Ovary (tissue), 10 donors: ENCODE measurements at regions of chrX and their contacts with region 1.

Region 1: GRCh38 chrX:74550295-74550802 is 64.1 kb downstream of the RLIM start:
- DNase-seq: peak; percentile 72 to 90 (median 86)
- H3K4me3 ChIP-seq: no peak overlapping the region
- H3K27ac ChIP-seq: no peak overlapping the region
- H3K4me1 ChIP-seq: no peaks in the 10 kb centered on the region
- H3K27me3 ChIP-seq: no peaks in the 10 kb centered on the region
- CTCF ChIP-seq: peak; percentile 81 to 96 (median 95)
- EP300 ChIP-seq: no peak
- POLR2A ChIP-seq: no peak

Region 2: DNA sequence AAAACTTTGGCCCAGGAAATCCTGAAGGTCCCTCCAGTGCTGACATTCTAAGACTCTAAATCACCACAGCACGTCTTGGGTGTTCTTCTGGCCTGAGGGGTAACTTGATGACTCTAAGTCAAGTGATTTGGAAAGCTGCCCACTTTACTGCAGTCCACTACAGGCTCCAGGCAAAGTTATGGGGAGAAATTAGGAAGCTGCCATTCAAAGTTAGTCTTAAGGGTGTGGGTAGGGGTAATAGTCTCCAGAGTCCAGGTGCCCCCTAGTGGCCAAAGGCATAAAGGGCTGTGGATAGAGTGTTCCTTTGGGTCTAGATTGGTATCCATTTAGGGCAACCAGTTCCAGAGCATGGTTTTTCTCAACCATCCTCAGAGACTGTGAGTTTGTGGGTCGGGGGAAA is 167.7 kb before region 1 on chrX:
- intact Hi-C with region 1: loop called in 1 of 4 experiments (anchors 5 kb)
- DNase-seq: peak; percentile 17 to 54 (median 45)
- H3K4me3 ChIP-seq: no peak overlapping the region
- H3K27ac ChIP-seq: no peak overlapping the region
- H3K4me1 ChIP-seq: no peaks in the 10 kb centered on the region
- H3K27me3 ChIP-seq: no peaks in the 10 kb centered on the region
- CTCF ChIP-seq: peak in 2 of 3 donors; percentile 14 to 35
- EP300 ChIP-seq: no peak
- POLR2A ChIP-seq: no peak

Region 3: DNA sequence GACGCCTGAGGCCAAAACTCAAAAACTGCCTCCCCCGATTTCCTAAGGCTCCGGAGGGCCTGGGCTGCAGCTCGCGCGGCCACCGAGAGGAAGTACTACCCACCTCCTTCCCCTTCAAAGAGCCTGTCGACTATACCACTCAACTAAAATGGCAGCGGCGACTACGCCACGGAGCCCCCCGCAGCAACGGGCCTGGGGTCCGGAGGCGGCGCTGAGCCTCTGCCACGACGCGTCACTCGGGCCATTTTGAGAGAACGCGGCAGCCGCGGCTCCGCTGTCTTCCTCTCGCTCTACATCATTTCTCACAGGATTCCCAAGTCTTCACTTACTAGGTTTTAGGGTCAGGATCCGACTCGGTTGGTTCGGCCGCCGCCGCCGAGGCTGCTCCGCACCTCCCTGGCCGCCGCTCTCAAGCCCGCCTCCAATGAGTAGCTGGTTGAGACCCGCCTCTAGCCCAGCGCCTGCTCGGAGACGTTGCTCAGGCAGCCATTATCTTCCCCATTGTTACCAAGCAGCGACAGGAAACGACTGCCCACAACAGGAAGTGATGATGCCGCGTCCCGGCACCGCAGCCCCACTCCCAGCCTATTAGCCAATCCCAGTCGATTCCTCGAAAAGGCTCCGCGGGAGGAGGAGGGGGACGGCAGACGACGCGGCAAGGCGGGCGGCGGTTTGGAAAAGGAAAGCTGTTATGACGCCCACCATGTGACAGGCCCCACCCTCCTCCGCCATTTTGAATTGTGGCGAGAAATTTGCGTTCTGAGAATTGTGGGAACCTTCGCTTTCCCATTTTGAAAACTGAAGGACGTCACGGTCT is 64.0 kb after region 1 on chrX and contains the start of gene RLIM:
- intact Hi-C with region 1: loop called in 1 of 4 experiments (anchors 10 kb)
- DNase-seq: peak; percentile 89 to 94 (median 91)
- H3K4me3 ChIP-seq: peak within 1 kb of the TSS; percentile 86
- H3K27ac ChIP-seq: peak within 1 kb of the TSS; percentile 56 to 90
- H3K4me1 ChIP-seq: no peaks in the 10 kb centered on the region
- H3K27me3 ChIP-seq: no peaks in the 10 kb centered on the region
- CTCF ChIP-seq: no peak
- EP300 ChIP-seq: peak; percentile 97
- POLR2A ChIP-seq: peak; percentile 83
- total RNA-seq, gene RLIM: 25.2 to 44.5 (median 34.2) TPM